Activated CD4-positive, alpha-beta memory T cell treated with anti-CD3 and anti-CD28 coated beads for 36 hours (primary cell): ENCODE measurements at regions of chr16 and their contacts with region 1.

Region 1: GRCh38 chr16:79316004-79316458 is 284.5 kb downstream of the MAF start:
- DNase-seq: peak; percentile 92
- H3K4me3 Mint-ChIP-seq: peak overlapping the region; percentile 28
- H3K27ac Mint-ChIP-seq: peak overlapping the region; percentile 91
- H3K4me1 Mint-ChIP-seq: peaks cover 37% of the 10 kb centered on the region
- H3K27me3 Mint-ChIP-seq: peaks cover 4% of the 10 kb centered on the region

Region 2: GRCh38 chr16:78778101-78779004 is 537.7 kb before region 1 on chr16:
- CTCF ChIA-PET with region 1: no interaction called
- POLR2A ChIA-PET with region 1: interaction called, 12 read pairs
- intact Hi-C with region 1: loop called (anchors 1 kb)
- DNase-seq: peak; percentile 90
- H3K4me3 Mint-ChIP-seq: peak overlapping the region; percentile 62
- H3K27ac Mint-ChIP-seq: peak overlapping the region; percentile 96
- H3K4me1 Mint-ChIP-seq: peaks cover 94% of the 10 kb centered on the region
- H3K27me3 Mint-ChIP-seq: no peaks in the 10 kb centered on the region

Region 3: GRCh38 chr16:79008036-79008868 is 307.8 kb before region 1 on chr16:
- CTCF ChIA-PET with region 1: no interaction called
- POLR2A ChIA-PET with region 1: interaction called, 7 read pairs
- intact Hi-C with region 1: loop called (anchors 1 kb)
- DNase-seq: peak; percentile 60
- H3K4me3 Mint-ChIP-seq: no peak overlapping the region
- H3K27ac Mint-ChIP-seq: peak overlapping the region; percentile 90
- H3K4me1 Mint-ChIP-seq: peaks cover 45% of the 10 kb centered on the region
- H3K27me3 Mint-ChIP-seq: no peaks in the 10 kb centered on the region

Region 4: DNA sequence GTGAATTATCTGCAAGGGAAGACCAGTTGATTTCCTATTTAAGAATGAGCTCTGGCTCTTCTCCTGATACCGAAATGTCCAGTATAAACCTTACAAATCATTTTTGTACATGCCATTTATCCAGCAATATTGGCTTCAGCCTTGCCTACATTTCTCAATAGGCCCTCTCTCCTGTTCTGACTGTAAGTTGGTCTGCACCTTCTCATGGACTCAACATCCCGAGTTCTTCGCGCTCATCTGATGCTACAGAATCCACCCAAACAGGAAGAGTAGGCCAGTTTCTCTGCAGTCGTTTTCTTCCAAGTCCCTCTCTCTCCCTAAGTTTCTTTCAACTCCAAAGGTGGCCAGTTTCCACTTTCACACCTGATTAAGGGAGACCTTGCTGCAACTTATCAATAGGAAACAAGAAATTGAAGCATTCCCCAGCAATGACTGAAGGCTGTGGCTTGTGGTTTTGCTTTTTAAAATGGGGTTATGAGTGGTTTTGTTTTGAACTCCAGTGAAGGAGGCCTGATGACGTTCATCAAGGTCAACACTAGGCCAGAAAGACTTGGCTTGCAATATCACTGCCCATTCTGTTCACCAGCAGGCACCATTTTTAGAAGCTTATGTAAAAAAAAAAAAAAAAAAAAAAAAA is 98.5 kb before region 1 on chr16:
- CTCF ChIA-PET with region 1: no interaction called
- POLR2A ChIA-PET with region 1: no interaction called
- intact Hi-C with region 1: loop called (anchors 5 kb)
- DNase-seq: peak; percentile 54
- H3K4me3 Mint-ChIP-seq: peak overlapping the region; percentile 21
- H3K27ac Mint-ChIP-seq: no peak overlapping the region
- H3K4me1 Mint-ChIP-seq: peaks cover 20% of the 10 kb centered on the region
- H3K27me3 Mint-ChIP-seq: no peaks in the 10 kb centered on the region

Region 5: DNA sequence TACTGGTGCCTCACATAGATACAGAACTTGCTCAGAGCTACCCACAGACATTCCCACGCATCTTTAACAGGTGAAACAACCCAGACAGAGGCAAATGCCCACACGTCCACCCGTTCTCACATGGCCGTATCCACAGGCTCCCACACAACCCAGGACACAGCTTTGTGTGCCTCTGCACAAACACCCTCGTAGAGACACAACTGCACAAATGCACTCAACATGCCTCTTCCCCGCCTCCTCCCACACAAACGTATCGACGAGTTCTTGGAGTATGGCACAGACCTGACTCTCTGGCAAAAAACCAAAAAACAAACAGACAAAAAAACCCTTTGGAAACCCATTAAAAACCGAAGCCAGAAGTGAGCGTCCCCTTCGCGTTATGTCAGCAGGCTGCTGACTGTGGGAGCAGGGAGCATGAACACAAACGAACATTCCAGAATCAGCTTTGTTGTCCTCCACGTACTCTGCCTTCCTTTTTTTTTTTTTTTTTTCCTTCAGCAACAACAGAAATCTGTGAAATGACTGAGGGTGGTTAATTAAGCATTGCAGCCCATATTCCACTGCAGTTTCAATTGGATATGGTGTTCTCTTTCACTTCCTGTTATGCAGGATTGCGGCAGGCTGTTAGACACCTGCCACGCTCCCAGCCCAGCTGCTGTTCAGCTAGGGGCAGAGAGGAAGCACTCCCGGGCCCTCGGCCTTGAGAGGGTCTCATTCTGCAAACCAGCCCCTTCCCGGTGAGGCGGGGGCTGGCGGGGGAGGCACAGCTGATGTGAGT is 29.2 kb before region 1 on chr16:
- CTCF ChIA-PET with region 1: interaction called, 12 read pairs
- POLR2A ChIA-PET with region 1: interaction called, 49 read pairs
- intact Hi-C with region 1: loop called (anchors 1 kb)
- DNase-seq: peak; percentile 69
- H3K4me3 Mint-ChIP-seq: peak overlapping the region; percentile 55
- H3K27ac Mint-ChIP-seq: peak overlapping the region; percentile 73
- H3K4me1 Mint-ChIP-seq: peaks cover 61% of the 10 kb centered on the region
- H3K27me3 Mint-ChIP-seq: no peaks in the 10 kb centered on the region

Region 6: GRCh38 chr16:79347277-79347676 is 31.2 kb after region 1 on chr16:
- CTCF ChIA-PET with region 1: no interaction called
- POLR2A ChIA-PET with region 1: no interaction called
- intact Hi-C with region 1: no loop called
- DNase-seq: peak; percentile 18
- H3K4me3 Mint-ChIP-seq: no peak overlapping the region
- H3K27ac Mint-ChIP-seq: no peak overlapping the region
- H3K4me1 Mint-ChIP-seq: peaks cover 20% of the 10 kb centered on the region
- H3K27me3 Mint-ChIP-seq: no peaks in the 10 kb centered on the region

Region 7: DNA sequence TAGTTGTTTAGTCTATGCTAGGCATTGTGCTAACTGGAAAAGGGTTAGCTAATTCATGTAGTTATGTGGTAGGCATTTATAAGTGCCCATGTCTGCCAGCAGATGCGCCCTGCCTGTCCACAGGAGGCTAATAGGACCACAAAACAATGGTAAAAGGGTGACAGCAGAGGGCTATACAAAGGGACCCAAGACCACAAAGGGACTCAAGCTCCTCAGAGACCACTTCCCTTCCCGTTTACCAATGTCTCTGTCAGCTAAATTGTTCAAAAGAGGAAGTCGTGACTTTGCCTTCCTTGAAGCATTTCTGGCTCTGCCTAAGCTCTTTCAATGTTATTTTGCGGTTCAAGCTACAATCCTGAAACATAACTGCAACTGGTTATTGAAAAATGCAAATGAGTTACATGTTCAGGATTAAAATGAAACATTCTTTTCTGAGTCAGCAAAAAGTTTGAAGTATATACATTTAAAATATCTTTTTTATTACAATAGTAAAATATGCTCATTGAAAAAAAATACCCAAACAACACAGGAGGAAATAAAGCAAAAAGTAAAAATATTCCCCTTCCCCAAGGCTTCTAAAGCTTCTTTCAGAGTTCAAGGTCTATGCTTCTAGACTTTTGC is 135.3 kb after region 1 on chr16:
- CTCF ChIA-PET with region 1: interaction called, 4 read pairs
- POLR2A ChIA-PET with region 1: no interaction called
- intact Hi-C with region 1: loop called (anchors 5 kb)
- DNase-seq: peak; percentile 21
- H3K4me3 Mint-ChIP-seq: no peak overlapping the region
- H3K27ac Mint-ChIP-seq: peak overlapping the region; percentile 64
- H3K4me1 Mint-ChIP-seq: peaks cover 20% of the 10 kb centered on the region
- H3K27me3 Mint-ChIP-seq: no peaks in the 10 kb centered on the region